CD4-positive, alpha-beta T cell (primary cell): ENCODE measurements at regions of chr2 and their contacts with region 1.

Region 1: DNA sequence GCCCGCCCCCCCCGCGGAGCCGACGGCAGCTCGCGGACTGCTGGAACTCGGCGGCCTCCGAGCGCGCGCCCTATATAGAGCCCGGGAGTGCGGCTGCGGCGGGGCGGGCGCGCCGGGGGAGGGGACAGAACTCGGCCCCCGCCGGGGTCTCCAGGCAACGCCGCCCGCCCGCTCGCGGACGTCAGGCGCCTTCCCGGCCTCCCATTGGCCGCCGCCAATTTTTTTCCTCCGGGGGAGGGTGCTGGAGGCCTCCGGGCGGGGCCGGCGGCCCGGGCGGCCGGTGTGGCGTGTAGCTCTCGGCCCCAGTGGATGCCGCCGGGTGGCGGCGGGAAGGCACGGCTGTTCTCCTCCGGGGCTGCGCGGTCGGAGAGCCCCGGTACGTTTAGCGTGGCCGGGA is at the start of gene ZFP36L2:
- DNase-seq: peak; percentile 89 to 98 (median 97)
- ATAC-seq: peak; percentile 59
- H3K4me3 ChIP-seq: peak within 1 kb of the TSS; percentile 97
- H3K4me3 Mint-ChIP-seq: peak within 1 kb of the TSS; percentile 93
- H3K27ac ChIP-seq: peak within 1 kb of the TSS; percentile 79 to 84
- H3K27ac Mint-ChIP-seq: peak within 1 kb of the TSS; percentile 98
- H3K4me1 ChIP-seq: peaks cover 31% of the 10 kb centered on the region
- H3K4me1 Mint-ChIP-seq: peaks cover 36% of the 10 kb centered on the region
- H3K27me3 ChIP-seq: no peaks in the 10 kb centered on the region
- H3K27me3 Mint-ChIP-seq: peaks cover 15% of the 10 kb centered on the region
- CTCF ChIP-seq: no peak
- total RNA-seq, gene ZFP36L2: 1,602 to 1,631 TPM

Region 2: DNA sequence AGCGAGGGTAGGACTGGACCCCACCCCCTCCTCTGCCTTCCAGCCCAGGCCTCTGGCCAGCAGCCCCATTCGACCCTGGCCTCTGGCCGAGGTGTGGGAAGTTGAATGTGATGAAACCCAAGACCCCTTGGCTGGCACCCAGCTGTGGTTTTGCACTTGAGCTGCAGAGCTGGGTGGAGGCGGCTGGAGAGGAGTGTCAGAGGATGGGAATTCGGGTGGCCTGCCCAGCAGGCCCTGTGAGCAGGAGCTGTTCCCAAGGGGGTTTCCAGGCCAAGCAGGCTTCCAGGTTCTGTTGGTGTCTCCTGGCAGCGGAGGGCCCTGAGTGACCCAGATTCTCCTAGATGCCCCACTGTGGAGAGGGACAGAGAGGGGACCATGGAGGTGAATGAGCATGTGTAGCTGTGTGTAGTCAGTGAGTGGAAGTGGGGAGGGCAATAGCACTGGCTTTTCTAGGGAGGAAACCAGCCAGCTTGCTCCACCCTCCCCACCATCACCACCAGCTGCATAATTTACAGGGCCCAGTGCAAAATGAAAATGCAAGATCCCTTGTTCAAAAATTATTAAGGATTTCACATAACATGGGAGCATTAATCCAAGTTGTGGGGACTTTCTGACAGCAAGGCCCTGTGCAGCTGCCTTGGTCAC is 262.0 kb before region 1 on chr2:
- CTCF ChIA-PET with region 1: interaction called, 3 read pairs
- POLR2A ChIA-PET with region 1: interaction called, 5 read pairs
- intact Hi-C with region 1: loop called in 1 of 2 experiments (anchors 5 kb)
- DNase-seq: no peak
- ATAC-seq: no peak
- H3K4me3 ChIP-seq: no peak overlapping the region
- H3K4me3 Mint-ChIP-seq: no peak overlapping the region
- H3K27ac ChIP-seq: no peak overlapping the region
- H3K27ac Mint-ChIP-seq: no peak overlapping the region
- H3K4me1 ChIP-seq: peaks cover 10% of the 10 kb centered on the region
- H3K4me1 Mint-ChIP-seq: peaks cover 16% of the 10 kb centered on the region
- H3K27me3 ChIP-seq: peaks cover 4 to 7% of the 10 kb centered on the region in 2 experiments
- H3K27me3 Mint-ChIP-seq: peaks cover 18% of the 10 kb centered on the region
- CTCF ChIP-seq: no peak

Region 3: GRCh38 chr2:43068041-43068533 is 158.5 kb before region 1 on chr2:
- CTCF ChIA-PET with region 1: no interaction called
- POLR2A ChIA-PET with region 1: no interaction called
- intact Hi-C with region 1: loop called in 1 of 2 experiments (anchors 5 kb)
- DNase-seq: no peak
- ATAC-seq: no peak
- H3K4me3 ChIP-seq: no peak overlapping the region
- H3K4me3 Mint-ChIP-seq: no peak overlapping the region
- H3K27ac ChIP-seq: no peak overlapping the region
- H3K27ac Mint-ChIP-seq: no peak overlapping the region
- H3K4me1 ChIP-seq: no peaks in the 10 kb centered on the region
- H3K4me1 Mint-ChIP-seq: no peaks in the 10 kb centered on the region
- H3K27me3 ChIP-seq: no peaks in the 10 kb centered on the region
- H3K27me3 Mint-ChIP-seq: no peaks in the 10 kb centered on the region
- CTCF ChIP-seq: no peak

Region 4: DNA sequence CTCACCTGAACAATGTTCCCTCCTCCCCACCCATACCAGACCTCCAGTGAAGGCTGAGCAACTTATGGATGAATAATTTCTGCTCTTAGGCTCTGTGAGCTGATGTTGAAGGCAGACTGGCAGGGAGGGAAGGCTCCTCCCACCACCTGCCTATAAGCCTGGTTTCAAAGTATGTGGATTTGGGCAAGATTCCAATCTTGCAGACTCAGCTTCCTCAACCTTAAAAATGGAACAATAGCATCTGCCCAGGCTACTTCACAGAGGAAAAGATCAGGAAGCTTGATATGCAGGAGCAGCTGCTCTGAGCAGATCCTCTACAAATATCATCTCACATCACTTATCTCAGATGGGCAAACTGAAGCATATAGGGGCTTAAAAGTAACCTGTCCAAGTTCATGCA is 112.3 kb before region 1 on chr2:
- CTCF ChIA-PET with region 1: no interaction called
- POLR2A ChIA-PET with region 1: no interaction called
- intact Hi-C with region 1: no loop called
- DNase-seq: no peak
- ATAC-seq: no peak
- H3K4me3 ChIP-seq: no peak overlapping the region
- H3K4me3 Mint-ChIP-seq: no peak overlapping the region
- H3K27ac ChIP-seq: no peak overlapping the region
- H3K27ac Mint-ChIP-seq: no peak overlapping the region
- H3K4me1 ChIP-seq: no peaks in the 10 kb centered on the region
- H3K4me1 Mint-ChIP-seq: peaks cover 4% of the 10 kb centered on the region
- H3K27me3 ChIP-seq: no peaks in the 10 kb centered on the region
- H3K27me3 Mint-ChIP-seq: no peaks in the 10 kb centered on the region
- CTCF ChIP-seq: no peak

Region 5: DNA sequence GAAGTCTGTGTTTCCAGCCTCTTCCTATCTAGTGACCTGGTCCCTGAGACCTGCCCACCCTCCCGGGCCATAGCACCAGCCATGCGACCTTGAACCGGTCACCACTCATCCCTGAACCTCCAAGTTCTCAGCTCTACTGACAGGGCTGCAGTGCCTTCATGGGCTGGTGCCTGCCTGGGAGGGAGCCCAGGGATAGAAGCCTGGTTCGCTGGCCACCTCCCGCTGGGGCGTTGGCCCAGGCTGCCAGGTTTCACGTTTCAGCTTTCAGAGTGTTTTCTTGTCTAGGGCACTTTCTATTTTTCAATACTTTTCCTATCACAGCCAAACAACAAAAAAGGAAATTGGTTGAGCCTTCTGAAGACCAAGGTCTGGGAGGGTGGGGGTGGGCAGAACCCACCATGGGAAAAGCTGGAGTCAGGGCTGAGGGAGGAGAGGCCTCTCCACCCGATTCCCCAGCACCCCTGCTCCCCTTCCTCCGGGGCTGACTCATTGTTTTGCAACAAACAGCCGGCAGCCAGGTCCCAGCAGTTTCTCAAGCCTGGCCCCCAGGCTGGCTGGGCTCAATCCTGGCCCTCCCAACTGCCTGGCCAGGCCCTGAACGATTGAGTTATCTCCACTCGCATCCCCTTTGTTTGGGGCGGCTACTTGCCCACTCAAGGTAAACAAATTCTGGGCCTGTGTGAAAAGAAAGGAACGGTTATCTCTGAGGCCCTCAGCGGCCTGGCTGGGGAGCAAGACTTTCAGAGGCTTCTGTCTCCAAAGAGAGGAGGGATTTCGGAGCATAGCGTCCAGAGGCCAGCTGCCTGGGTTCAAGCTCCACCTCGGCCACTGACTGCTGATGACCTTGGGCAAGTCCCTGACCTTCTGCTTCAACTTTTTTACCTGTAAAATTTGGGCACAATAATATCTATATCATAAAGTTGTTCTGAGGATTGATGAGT is 47.7 kb before region 1 on chr2:
- CTCF ChIA-PET with region 1: interaction called, 31 read pairs
- POLR2A ChIA-PET with region 1: interaction called, 790 read pairs
- intact Hi-C with region 1: loop called (anchors 1 to 2 kb)
- DNase-seq: peak in 9 of 14 experiments; percentile 32 to 72 (median 56)
- ATAC-seq: no peak
- H3K4me3 ChIP-seq: no peak overlapping the region
- H3K4me3 Mint-ChIP-seq: peak overlapping the region; percentile 70
- H3K27ac ChIP-seq: peak overlapping the region; percentile 54 to 77
- H3K27ac Mint-ChIP-seq: peak overlapping the region; percentile 97
- H3K4me1 ChIP-seq: peaks cover 80% of the 10 kb centered on the region
- H3K4me1 Mint-ChIP-seq: peaks cover 73% of the 10 kb centered on the region
- H3K27me3 ChIP-seq: no peaks in the 10 kb centered on the region
- H3K27me3 Mint-ChIP-seq: no peaks in the 10 kb centered on the region
- CTCF ChIP-seq: no peak

Region 6: GRCh38 chr2:43239981-43240761 is 13.6 kb after region 1 on chr2:
- CTCF ChIA-PET with region 1: interaction called, 12 read pairs
- POLR2A ChIA-PET with region 1: interaction called, 3 read pairs
- intact Hi-C with region 1: no loop called
- DNase-seq: peak in 1 of 14 experiments; percentile 33
- ATAC-seq: no peak
- H3K4me3 ChIP-seq: no peak overlapping the region
- H3K4me3 Mint-ChIP-seq: no peak overlapping the region
- H3K27ac ChIP-seq: no peak overlapping the region
- H3K27ac Mint-ChIP-seq: no peak overlapping the region
- H3K4me1 ChIP-seq: peaks cover 11% of the 10 kb centered on the region
- H3K4me1 Mint-ChIP-seq: peaks cover 7% of the 10 kb centered on the region
- H3K27me3 ChIP-seq: no peaks in the 10 kb centered on the region
- H3K27me3 Mint-ChIP-seq: no peaks in the 10 kb centered on the region
- CTCF ChIP-seq: no peak